ENCODE measurements at regions of chr6 and their contacts with region 1.

Region 1: DNA sequence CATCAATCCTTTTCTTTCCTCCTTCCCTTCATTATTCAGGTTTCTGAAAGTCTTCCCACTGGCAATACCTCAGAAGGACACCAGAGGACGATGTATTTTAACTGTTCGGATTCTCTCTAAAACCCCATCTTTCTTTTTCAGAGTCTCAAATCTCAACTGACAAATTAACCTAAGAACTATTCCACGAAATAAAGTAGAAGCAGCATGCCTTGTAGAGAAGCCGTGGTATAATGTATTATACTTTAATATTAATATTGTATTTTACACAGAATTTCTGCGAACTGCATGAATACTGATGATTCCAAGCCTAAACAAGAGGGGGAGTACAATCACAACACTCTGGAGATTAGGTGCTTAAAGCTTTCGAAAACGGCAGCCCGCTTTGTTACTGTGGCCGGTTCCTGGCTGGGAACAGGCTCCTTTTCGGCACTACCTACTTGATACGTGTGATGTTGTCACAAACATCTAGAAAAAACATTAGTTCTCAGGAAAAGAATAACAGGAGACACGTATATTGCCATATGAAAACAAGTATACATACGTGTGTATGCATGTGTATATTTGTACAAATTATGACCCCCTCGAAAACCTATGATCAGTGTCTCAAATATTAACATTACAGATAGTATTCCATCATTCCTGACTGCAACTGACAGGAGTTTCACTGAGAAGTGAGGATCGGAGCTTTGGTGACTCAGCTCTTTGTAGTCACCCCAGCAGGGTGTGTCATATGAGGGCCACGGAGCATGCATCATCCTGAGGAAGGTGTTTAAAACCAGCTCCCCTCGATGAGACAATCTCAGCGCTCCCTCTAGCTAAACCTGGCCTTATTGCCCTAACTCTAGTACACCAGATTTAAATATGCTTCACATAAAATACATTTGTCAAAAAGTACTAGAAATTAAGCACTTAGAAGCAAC is 319.7 kb upstream of the TCF21 start:
- DNase-seq: peak; percentile 66
- H3K4me3 Mint-ChIP-seq: peak overlapping the region; percentile 63
- H3K27ac Mint-ChIP-seq: peak overlapping the region; percentile 56
- H3K4me1 Mint-ChIP-seq: no peaks in the 10 kb centered on the region
- H3K27me3 Mint-ChIP-seq: no peaks in the 10 kb centered on the region
- CTCF ChIP-seq: peak; percentile 82

Region 2: GRCh38 chr6:133768656-133769295 is 199.5 kb after region 1 on chr6:
- CTCF ChIA-PET with region 1: no interaction called
- intact Hi-C with region 1: no loop called
- DNase-seq: no peak
- H3K4me3 Mint-ChIP-seq: no peak overlapping the region
- H3K27ac Mint-ChIP-seq: no peak overlapping the region
- H3K4me1 Mint-ChIP-seq: peaks cover 20% of the 10 kb centered on the region
- H3K27me3 Mint-ChIP-seq: no peaks in the 10 kb centered on the region
- CTCF ChIP-seq: no peak

Region 3: DNA sequence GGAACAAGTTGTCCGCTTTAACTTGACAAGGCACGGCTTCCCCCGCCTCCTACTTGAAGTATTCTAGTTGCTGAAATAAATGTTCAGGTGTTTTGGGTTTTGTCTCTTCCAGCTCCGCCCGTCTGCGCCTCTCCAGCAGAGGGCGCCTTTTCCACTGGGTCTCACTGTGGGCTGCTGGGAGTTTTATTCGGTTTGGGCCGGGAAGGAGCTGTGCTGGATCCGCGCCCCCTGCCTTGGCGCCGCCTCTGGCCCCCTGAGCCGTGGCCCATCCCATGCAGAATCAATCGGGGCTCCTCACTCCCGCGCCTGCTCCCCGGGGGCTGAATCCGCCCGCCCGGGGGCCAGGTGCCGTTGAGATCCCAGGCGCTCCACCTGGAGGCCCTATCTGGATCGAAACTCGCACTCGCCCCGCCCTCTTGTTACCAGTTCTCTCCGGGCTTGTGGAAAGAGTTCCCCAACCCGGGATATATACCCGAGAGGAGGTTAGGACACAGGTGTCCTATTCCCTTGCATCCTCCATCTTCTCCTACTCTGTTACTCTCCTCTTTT is 268.6 kb after region 1 on chr6:
- CTCF ChIA-PET with region 1: interaction called, 44 read pairs
- intact Hi-C with region 1: loop called (anchors 2 kb)
- DNase-seq: peak; percentile 86
- H3K4me3 Mint-ChIP-seq: peak overlapping the region; percentile 87
- H3K27ac Mint-ChIP-seq: peak overlapping the region; percentile 70
- H3K4me1 Mint-ChIP-seq: peaks cover 7% of the 10 kb centered on the region
- H3K27me3 Mint-ChIP-seq: no peaks in the 10 kb centered on the region
- CTCF ChIP-seq: peak; percentile 93

Region 4: GRCh38 chr6:133916650-133917151 is 347.5 kb after region 1 on chr6:
- CTCF ChIA-PET with region 1: interaction called, 82 read pairs
- intact Hi-C with region 1: loop called (anchors 1 kb)
- DNase-seq: peak; percentile 92
- H3K4me3 Mint-ChIP-seq: no peak overlapping the region
- H3K27ac Mint-ChIP-seq: no peak overlapping the region
- H3K4me1 Mint-ChIP-seq: no peaks in the 10 kb centered on the region
- H3K27me3 Mint-ChIP-seq: no peaks in the 10 kb centered on the region
- CTCF ChIP-seq: peak; percentile 85

Region 5: DNA sequence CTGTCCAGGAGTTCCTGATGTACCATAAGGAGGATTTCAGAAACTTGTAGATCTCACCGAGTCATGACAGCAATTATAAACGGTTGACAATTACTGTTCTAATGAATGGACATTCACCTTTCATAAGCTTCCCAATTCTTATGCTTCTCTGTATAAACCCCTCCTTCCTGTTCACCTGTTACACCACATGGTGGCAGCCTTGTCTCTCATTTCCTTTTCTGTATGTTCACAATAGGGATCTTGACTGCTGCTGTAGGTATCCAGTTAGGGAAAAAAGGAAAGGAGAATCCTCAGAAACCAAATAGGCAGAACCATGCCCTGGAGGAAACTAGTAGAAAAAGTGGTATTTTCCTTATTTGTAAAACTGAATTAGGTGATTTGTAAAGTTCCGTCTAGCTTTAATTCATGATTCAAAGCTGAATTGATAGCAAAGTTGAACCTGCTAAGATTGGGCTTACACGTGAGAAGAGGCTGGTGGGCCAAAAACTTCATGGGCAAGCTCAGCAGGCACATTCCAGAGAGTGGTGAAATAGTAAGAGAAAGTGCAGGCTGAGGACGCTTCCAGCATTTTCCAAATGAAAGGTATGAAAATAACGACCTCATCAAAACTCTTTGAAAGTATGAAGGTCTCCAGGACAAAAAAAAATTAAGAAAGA is 354.8 kb after region 1 on chr6:
- CTCF ChIA-PET with region 1: interaction called, 26 read pairs
- intact Hi-C with region 1: loop called (anchors 1 kb)
- DNase-seq: peak; percentile 70
- H3K4me3 Mint-ChIP-seq: no peak overlapping the region
- H3K27ac Mint-ChIP-seq: no peak overlapping the region
- H3K4me1 Mint-ChIP-seq: no peaks in the 10 kb centered on the region
- H3K27me3 Mint-ChIP-seq: no peaks in the 10 kb centered on the region
- CTCF ChIP-seq: peak; percentile 70

Measured in Calu3 (cell line).